T-cell (primary cell): ENCODE measurements at regions of chr11 and their contacts with region 1.

Region 1: DNA sequence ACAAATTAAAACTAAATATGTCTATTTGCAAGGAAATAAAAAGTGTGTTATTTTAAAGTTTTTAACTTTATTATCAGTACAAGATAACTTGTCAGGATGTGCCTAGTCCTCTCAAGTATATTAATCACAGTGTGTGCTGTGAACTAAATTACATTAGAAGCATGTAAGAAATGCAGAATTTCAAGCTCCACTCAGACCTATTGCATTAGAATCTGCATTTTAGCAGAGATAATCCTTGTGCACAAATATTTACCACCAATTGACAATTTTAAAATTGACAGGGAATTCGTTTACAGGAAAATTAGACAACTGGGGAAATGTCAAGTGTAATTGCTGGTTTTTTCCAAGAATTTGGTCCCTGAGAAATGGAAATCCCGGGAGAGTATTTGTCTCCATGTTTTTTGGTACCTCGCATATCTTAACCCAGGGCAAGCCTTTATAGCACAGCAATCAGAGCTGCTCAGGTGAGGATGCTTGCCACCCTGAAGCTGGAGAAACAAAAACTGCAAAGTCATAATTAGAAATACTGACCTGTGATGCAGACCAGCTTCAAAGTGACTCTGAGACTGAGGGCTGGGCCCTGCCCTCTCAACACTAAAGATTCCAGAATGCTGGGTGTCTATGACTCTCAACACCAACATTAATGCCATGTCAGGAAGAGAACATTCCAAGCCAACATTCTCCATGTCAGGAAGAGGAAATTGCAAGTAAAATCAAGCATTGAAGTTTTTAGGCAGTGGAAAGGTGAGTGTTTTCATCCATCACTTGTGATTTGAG is at the start of gene OR8G1:
- DNase-seq: no peak
- ATAC-seq: no peak
- H3K4me3 ChIP-seq: no peak within 1 kb of the TSS
- H3K4me3 Mint-ChIP-seq: no peak within 1 kb of the TSS
- H3K27ac ChIP-seq: no peak within 1 kb of the TSS
- H3K27ac Mint-ChIP-seq: no peak within 1 kb of the TSS
- H3K4me1 ChIP-seq: no peaks in the 10 kb centered on the region
- H3K4me1 Mint-ChIP-seq: no peaks in the 10 kb centered on the region
- H3K27me3 ChIP-seq: no peaks in the 10 kb centered on the region
- H3K27me3 Mint-ChIP-seq: peaks cover 0 to 11% of the 10 kb centered on the region in 2 donors
- total RNA-seq, gene OR8G1: not detected

Region 2: DNA sequence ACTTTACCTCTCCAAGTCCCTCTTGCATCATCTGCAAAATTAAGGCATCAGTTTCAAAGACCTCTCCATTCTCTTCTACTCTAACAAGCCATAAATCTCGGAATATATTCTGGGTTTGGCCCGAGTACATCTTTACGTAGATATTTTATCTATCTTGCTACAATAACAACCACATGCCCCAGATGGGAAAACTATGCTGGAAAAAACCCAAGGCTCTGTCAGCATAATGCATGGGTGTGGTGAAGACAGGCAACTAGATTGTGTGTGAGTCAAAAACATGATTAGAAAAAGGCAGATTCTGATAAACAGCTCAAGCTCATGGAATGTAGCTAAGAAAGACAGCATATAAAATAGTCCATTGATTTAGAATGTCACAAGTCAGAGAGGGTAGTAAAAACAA is 1896.5 kb before region 1 on chr11:
- CTCF ChIA-PET with region 1: no interaction called
- POLR2A ChIA-PET with region 1: no interaction called
- DNase-seq: no peak
- ATAC-seq: no peak
- H3K4me3 ChIP-seq: no peak overlapping the region
- H3K4me3 Mint-ChIP-seq: no peak overlapping the region
- H3K27ac ChIP-seq: no peak overlapping the region
- H3K27ac Mint-ChIP-seq: no peak overlapping the region
- H3K4me1 ChIP-seq: no peaks in the 10 kb centered on the region
- H3K4me1 Mint-ChIP-seq: no peaks in the 10 kb centered on the region
- H3K27me3 ChIP-seq: no peaks in the 10 kb centered on the region
- H3K27me3 Mint-ChIP-seq: no peaks in the 10 kb centered on the region

Region 3: DNA sequence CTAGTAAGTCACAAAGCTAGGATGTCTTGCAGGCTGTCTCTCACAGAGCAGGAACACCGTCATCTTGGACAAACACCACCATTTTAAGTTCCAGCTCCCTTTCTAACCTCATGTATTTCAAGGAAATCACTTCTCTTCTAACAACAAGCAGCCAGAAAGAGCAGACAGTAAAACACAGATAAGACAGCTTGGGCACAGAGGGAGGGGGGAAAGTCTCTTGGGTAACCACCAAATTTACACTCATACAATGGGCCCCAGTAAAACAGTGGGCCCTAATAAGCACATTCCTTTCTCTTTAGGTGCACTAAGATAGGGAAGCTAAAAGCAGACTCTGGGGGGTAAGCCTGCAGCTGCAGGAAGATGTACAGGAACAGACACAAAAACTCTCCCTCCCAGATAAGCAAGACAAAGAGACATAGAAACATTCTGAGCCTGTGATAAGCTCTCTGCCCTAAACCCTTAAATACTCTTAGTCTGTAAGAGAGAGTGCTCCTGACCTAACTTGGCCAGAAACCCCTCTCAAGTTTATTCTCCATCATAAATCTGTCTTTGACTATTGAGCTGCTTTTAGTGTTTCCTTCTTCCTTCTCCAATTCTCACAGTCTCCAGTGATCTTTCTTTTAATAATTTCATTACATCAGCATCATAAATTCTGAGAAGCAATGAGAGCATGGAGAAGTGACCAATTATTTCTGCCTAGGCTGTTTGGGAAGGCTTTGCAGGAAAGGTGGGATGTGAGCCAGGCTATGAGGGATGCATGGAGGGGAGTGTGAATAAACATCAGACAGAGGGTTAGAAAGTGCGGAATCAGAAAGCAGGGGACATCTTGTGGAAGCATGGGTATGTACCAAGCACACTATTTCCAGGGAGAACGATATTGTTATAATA is 50.3 kb before region 1 on chr11:
- CTCF ChIA-PET with region 1: no interaction called
- POLR2A ChIA-PET with region 1: no interaction called
- DNase-seq: no peak
- ATAC-seq: no peak
- H3K4me3 ChIP-seq: no peak overlapping the region
- H3K4me3 Mint-ChIP-seq: no peak overlapping the region
- H3K27ac ChIP-seq: no peak overlapping the region
- H3K27ac Mint-ChIP-seq: no peak overlapping the region
- H3K4me1 ChIP-seq: no peaks in the 10 kb centered on the region
- H3K4me1 Mint-ChIP-seq: no peaks in the 10 kb centered on the region
- H3K27me3 ChIP-seq: no peaks in the 10 kb centered on the region
- H3K27me3 Mint-ChIP-seq: peaks cover 28 to 35% of the 10 kb centered on the region in 2 donors

Region 4: DNA sequence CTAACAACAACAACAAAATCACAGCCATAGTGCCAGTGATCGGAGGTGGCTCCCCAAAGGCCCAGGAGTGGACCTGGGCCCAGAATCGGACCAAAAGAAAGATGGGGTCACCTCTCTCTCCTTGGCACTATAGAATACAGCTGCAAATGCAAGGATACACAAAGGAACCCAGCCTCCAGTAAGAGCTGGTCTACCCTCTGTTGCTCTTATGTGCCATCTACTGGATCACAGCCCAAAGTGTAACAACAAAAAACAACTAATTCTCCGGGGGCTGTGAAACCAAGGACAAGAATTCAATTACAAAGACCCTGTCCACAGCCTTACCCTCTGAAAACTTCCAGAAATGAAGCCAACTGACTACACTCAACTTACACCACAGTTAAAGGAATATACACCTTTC is 37.0 kb after region 1 on chr11:
- CTCF ChIA-PET with region 1: no interaction called
- POLR2A ChIA-PET with region 1: no interaction called
- DNase-seq: no peak
- ATAC-seq: no peak
- H3K4me3 ChIP-seq: no peak overlapping the region
- H3K4me3 Mint-ChIP-seq: no peak overlapping the region
- H3K27ac ChIP-seq: no peak overlapping the region
- H3K27ac Mint-ChIP-seq: no peak overlapping the region
- H3K4me1 ChIP-seq: no peaks in the 10 kb centered on the region
- H3K4me1 Mint-ChIP-seq: no peaks in the 10 kb centered on the region
- H3K27me3 ChIP-seq: peaks cover 0 to 8% of the 10 kb centered on the region in 2 experiments
- H3K27me3 Mint-ChIP-seq: no peaks in the 10 kb centered on the region

Region 5: DNA sequence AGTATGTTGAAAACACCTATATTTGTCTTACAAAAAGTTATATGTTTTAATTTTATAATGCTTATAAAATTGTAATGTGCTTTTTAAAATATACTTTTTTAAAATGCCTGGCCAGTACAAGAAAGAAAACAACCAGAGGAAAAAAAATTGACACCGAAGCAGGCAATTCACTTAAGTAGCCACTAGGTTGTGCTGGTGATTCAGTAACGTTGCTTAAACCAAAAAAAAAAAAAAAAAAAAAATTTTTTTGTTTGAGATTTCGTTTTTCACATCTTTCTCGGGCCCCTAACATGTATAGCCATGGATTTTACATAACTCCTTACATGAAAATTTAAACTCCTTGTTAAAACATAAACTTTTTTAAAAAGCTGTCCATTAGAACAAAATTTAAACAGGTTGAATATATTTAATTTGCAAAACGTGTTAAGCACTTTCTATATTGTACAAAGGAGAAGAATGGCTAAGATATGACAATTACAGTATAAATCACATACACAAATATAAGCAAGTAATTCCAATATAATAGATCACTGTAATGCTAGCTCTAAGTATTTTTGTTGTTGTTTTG is 174.6 kb after region 1 on chr11:
- CTCF ChIA-PET with region 1: interaction called in 1 of 2 experiments, 12 read pairs
- POLR2A ChIA-PET with region 1: no interaction called
- DNase-seq: peak in 1 of 35 experiments; percentile 31
- ATAC-seq: no peak
- H3K4me3 ChIP-seq: no peak overlapping the region
- H3K4me3 Mint-ChIP-seq: no peak overlapping the region
- H3K27ac ChIP-seq: no peak overlapping the region
- H3K27ac Mint-ChIP-seq: no peak overlapping the region
- H3K4me1 ChIP-seq: no peaks in the 10 kb centered on the region
- H3K4me1 Mint-ChIP-seq: no peaks in the 10 kb centered on the region
- H3K27me3 ChIP-seq: peaks cover 4 to 8% of the 10 kb centered on the region in 2 experiments
- H3K27me3 Mint-ChIP-seq: peaks cover 4 to 19% of the 10 kb centered on the region in 2 donors